ENCODE measurements at regions of chr16 and their contacts with region 1.

Region 1: DNA sequence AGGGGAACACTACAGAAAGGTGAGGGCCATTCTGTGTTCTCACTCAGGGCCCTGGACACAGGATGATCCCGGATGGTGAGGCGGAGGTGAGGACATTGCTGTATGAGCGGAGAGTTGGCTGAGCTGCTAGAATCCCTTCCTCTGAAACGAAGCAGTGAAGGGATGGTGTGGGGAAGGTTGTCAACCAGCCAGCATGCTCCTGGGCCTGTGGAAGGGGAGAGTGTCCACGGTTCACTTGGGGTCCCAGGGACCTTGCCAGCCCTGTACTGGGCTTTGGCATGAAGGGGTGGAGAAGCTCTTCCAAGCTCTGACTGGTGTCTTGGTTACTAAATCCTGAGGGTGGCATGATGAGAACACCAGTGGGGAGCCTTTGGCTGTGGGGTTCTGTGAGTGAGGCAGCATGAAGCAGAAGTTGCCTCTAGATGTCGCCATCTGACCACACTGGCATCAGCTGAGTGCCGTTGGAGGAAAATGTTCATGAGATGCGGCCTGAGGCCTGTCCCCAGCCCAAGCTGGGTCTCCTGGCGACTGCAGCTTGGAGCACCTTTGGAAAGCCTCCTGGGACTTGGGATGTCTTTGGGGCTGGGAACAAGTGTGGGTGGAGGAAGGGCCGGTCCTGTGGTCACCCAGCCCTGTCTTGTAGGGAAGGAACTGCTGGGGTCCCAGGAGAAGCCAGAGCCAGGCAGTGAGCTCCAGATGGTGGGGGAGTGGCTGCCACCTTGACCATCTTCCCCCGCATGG is 14.8 kb downstream of the PDP2 start:
- DNase-seq: peak; percentile 76
- ATAC-seq: peak; percentile 77 to 83

Region 2: GRCh38 chr16:66947302-66948065 is 52.4 kb after region 1 on chr16:
- intact Hi-C with region 1: loop called in 1 of 2 experiments (anchors 5 kb)
- DNase-seq: peak; percentile 84
- ATAC-seq: peak; percentile 72 to 79

Region 3: GRCh38 chr16:66959704-66960161 is 64.6 kb after region 1 on chr16:
- intact Hi-C with region 1: no loop called
- DNase-seq: peak; percentile 39
- ATAC-seq: peak; percentile 48 to 62

Region 4: GRCh38 chr16:67183627-67184328 is 288.7 kb after region 1 on chr16 and contains the start of gene MATCAP1:
- intact Hi-C with region 1: loop called in 1 of 2 experiments (anchors 10 kb)
- DNase-seq: peak; percentile 96
- ATAC-seq: peak; percentile 94 to 96
- total RNA-seq, gene MATCAP1: 16.8 to 18.1 TPM